ENCODE measurements at regions of chr1 and their contacts with region 1.

Region 1: GRCh38 chr1:243708210-243708609 is 141.8 kb downstream of the AKT3 start:
- DNase-seq: peak in 1 of 2 donors; percentile 40
- ATAC-seq: no peak
- H3K4me3 ChIP-seq: no peak overlapping the region
- H3K4me3 Mint-ChIP-seq: no peak overlapping the region
- H3K27ac ChIP-seq: no peak overlapping the region
- H3K27ac Mint-ChIP-seq: no peak overlapping the region
- H3K4me1 ChIP-seq: no peaks in the 10 kb centered on the region
- H3K4me1 Mint-ChIP-seq: peaks cover 26 to 35% of the 10 kb centered on the region in 2 donors
- H3K27me3 ChIP-seq: no peaks in the 10 kb centered on the region
- H3K27me3 Mint-ChIP-seq: no peaks in the 10 kb centered on the region
- CTCF ChIP-seq: peak; percentile 54

Region 2: DNA sequence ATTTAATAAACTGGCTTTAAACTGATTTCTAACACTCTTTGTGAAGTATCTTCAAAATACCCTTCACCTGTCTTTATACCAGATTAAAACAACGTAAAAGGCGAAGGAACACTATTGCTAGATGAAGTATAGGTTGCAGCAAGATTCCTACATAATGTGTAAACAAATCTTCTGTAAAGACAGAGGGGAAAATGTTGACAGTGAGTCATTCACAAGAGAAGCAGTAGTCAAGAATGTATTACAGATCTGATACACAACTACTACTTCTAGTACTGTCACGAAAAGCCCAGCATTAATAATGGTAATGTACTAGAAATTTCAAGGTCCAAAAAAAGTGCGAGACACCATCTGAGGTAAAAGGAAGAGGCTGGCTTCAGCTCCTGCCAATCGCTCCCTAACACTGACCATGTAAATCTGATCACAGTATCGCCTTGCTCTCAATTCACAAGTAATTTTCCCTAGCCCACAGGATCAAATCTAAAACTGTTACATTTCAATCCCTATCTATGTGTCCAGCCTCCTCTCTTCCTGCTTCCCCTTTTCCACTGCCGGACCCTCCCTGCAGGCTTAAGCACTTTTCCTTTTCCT is 148.5 kb before region 1 on chr1:
- intact Hi-C with region 1: no loop called
- DNase-seq: no peak
- ATAC-seq: no peak
- H3K4me3 ChIP-seq: no peak overlapping the region
- H3K4me3 Mint-ChIP-seq: no peak overlapping the region
- H3K27ac ChIP-seq: no peak overlapping the region
- H3K27ac Mint-ChIP-seq: no peak overlapping the region
- H3K4me1 ChIP-seq: no peaks in the 10 kb centered on the region
- H3K4me1 Mint-ChIP-seq: peaks cover 0 to 11% of the 10 kb centered on the region in 2 donors
- H3K27me3 ChIP-seq: no peaks in the 10 kb centered on the region
- H3K27me3 Mint-ChIP-seq: no peaks in the 10 kb centered on the region
- CTCF ChIP-seq: no peak

Region 3: DNA sequence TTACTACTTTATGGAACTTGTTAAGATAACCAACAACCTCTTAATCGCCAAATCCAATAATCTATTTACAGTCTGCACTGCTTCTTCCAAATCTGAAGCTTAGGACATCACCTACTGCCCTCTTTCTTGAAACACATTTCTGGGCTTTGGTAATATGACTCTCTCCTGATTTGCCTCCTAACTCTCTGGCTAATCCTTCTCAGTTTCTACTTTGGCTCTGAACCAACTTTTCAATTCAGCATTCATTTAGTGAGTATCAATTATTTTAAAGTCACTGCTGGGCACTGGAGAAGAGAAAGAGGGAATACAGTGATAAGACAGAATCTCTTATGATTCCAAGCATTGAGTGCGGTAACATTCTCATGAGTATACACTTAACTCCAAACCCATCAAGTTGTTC is 133.1 kb before region 1 on chr1:
- intact Hi-C with region 1: no loop called
- DNase-seq: no peak
- ATAC-seq: no peak
- H3K4me3 ChIP-seq: no peak overlapping the region
- H3K4me3 Mint-ChIP-seq: no peak overlapping the region
- H3K27ac ChIP-seq: no peak overlapping the region
- H3K27ac Mint-ChIP-seq: no peak overlapping the region
- H3K4me1 ChIP-seq: no peaks in the 10 kb centered on the region
- H3K4me1 Mint-ChIP-seq: peaks cover 15 to 36% of the 10 kb centered on the region in 2 donors
- H3K27me3 ChIP-seq: no peaks in the 10 kb centered on the region
- H3K27me3 Mint-ChIP-seq: no peaks in the 10 kb centered on the region
- CTCF ChIP-seq: no peak

Region 4: DNA sequence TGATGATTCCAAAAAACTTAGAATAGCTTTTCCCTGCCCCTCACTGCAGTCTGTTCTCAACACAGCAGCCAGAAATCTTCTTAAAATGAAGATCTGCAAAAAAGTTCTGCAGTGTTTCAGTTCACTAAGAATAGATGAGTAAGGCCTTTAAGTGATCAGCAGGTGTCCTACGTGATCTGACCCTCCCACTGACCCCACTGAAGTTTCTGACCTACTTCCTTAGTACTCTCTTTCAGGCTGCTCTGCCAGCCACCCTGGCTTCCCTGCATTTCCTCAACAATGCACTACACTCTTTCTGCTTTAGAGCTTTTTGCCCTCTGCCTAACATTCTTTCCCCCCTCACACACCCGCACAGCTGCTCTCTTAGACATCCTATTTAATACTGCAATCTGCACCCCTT is 40.6 kb before region 1 on chr1:
- intact Hi-C with region 1: no loop called
- DNase-seq: no peak
- ATAC-seq: no peak
- H3K4me3 ChIP-seq: no peak overlapping the region
- H3K4me3 Mint-ChIP-seq: no peak overlapping the region
- H3K27ac ChIP-seq: no peak overlapping the region
- H3K27ac Mint-ChIP-seq: peak overlapping the region in 1 of 2 donors; percentile 14
- H3K4me1 ChIP-seq: no peaks in the 10 kb centered on the region
- H3K4me1 Mint-ChIP-seq: peaks cover 27 to 34% of the 10 kb centered on the region in 2 donors
- H3K27me3 ChIP-seq: no peaks in the 10 kb centered on the region
- H3K27me3 Mint-ChIP-seq: no peaks in the 10 kb centered on the region
- CTCF ChIP-seq: no peak

Region 5: GRCh38 chr1:243946946-243947345 is 238.7 kb after region 1 on chr1:
- intact Hi-C with region 1: loop called (anchors 2 kb)
- DNase-seq: peak in 1 of 2 donors; percentile 66
- ATAC-seq: peak; percentile 52 to 68 (median 64)
- H3K4me3 ChIP-seq: no peak overlapping the region
- H3K4me3 Mint-ChIP-seq: no peak overlapping the region
- H3K27ac ChIP-seq: no peak overlapping the region
- H3K27ac Mint-ChIP-seq: no peak overlapping the region
- H3K4me1 ChIP-seq: no peaks in the 10 kb centered on the region
- H3K4me1 Mint-ChIP-seq: no peaks in the 10 kb centered on the region
- H3K27me3 ChIP-seq: no peaks in the 10 kb centered on the region
- H3K27me3 Mint-ChIP-seq: peaks cover 4 to 15% of the 10 kb centered on the region in 2 donors
- CTCF ChIP-seq: peak; percentile 60

Region 6: DNA sequence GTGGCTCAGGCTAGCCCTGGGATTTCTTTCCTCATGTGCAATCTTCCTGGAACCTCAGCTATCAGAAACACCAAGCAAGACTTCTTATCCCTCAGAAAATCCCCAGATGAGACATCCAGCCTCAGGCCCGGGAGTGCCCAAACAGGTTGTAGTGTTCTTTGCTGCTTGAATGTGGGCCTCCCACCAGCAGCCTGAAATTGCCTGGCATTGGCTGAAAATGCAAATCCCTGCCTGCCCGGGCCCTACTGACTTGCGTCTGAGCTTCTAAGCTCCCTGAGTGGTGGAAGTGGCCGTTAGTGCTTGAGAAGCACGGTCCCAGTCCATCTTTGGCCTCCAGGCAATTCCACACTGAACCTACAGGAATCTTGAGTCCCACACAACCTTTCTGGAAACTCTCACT is 489.7 kb after region 1 on chr1:
- intact Hi-C with region 1: no loop called
- DNase-seq: no peak
- ATAC-seq: no peak
- H3K4me3 ChIP-seq: no peak overlapping the region
- H3K4me3 Mint-ChIP-seq: no peak overlapping the region
- H3K27ac ChIP-seq: no peak overlapping the region
- H3K27ac Mint-ChIP-seq: no peak overlapping the region
- H3K4me1 ChIP-seq: no peaks in the 10 kb centered on the region
- H3K4me1 Mint-ChIP-seq: no peaks in the 10 kb centered on the region
- H3K27me3 ChIP-seq: no peaks in the 10 kb centered on the region
- H3K27me3 Mint-ChIP-seq: peaks cover 5 to 23% of the 10 kb centered on the region in 2 donors
- CTCF ChIP-seq: no peak

Region 7: GRCh38 chr1:244272471-244273261 is 564.5 kb after region 1 on chr1:
- intact Hi-C with region 1: loop called (anchors 1 kb)
- DNase-seq: peak; percentile 61 to 90
- ATAC-seq: peak; percentile 94 to 100 (median 99)
- H3K4me3 ChIP-seq: no peak overlapping the region
- H3K4me3 Mint-ChIP-seq: no peak overlapping the region
- H3K27ac ChIP-seq: no peak overlapping the region
- H3K27ac Mint-ChIP-seq: peak overlapping the region in 1 of 2 donors; percentile 4
- H3K4me1 ChIP-seq: peaks cover 7% of the 10 kb centered on the region
- H3K4me1 Mint-ChIP-seq: peaks cover 6 to 30% of the 10 kb centered on the region in 2 donors
- H3K27me3 ChIP-seq: no peaks in the 10 kb centered on the region
- H3K27me3 Mint-ChIP-seq: peaks cover 0 to 4% of the 10 kb centered on the region in 2 donors
- CTCF ChIP-seq: peak; percentile 99

Measured in natural killer cell (primary cell).